ENCODE measurements at regions of chr11 and their contacts with region 1.

Region 1: DNA sequence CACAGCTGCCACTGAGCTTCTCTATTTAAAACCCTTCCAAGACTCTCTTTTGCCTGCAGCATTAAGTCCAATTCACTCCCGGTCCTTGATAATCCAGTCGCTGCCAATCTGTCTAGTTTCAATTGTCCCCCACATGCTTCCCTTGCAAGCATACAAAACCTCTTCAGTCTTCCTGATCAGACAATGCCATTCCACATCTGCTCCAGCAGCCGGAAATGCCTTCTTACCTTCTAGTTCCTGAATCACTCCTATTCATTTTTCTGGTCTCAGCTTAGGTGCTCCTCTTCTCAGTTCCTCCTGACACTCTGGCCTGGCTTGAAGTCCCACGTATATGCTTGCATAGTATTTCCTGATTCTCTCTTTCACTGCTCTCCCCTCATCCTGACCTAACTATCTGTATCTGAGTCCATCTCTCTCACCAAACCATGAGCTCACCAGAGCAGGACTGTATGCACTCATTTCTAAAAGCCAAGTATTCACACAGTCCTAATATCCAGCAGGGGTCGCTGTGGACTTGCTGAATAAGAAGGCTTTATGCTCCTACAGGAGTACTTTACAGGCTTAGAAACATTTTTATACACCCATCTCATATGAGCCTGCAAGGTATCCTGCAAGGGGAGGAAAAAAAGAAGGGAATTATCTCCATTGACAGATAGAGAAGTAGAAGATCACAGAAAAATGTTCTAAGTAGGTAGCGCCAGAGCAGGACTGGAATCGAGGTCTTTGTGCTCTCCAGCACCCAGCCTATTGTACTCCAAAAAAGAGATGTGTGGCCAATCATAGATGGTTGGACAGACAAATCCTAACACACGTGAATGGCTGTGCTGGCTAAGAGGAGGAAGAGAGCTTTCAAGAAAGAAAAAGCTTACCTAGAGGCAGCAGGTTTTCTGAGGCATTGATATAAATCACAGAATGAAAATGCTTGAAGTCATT is 19.2 kb downstream of the XRRA1 start:
- DNase-seq: peak; percentile 84
- H3K4me3 ChIP-seq: no peak overlapping the region
- H3K27ac ChIP-seq: peak overlapping the region; percentile 23
- H3K4me1 ChIP-seq: peaks cover 25% of the 10 kb centered on the region
- H3K27me3 ChIP-seq: no peaks in the 10 kb centered on the region
- CTCF ChIP-seq: peak; percentile 70 to 78
- POLR2A ChIP-seq: no peak

Region 2: DNA sequence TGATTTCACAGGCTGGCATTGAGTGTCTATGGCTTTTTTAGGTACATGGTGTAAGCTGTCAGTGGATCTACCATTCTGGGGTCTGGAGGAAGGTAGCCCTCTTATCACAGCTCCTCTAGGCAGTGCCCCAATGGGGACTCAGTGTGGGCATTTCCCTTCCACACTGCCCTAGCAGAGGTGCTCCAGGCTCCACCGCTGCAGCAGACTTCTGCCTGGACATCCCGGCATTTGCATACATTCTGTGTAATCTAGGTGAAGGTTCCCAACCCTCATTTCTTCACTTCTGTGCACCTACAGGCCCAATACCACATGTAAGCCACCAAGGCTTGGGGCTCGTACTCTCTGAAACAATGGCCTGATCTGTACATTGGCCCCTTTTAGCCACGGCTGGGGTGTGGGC is 102.8 kb before region 1 on chr11:
- CTCF ChIA-PET with region 1: no interaction called
- POLR2A ChIA-PET with region 1: no interaction called
- dilution Hi-C with region 1: no loop called
- intact Hi-C with region 1: no loop called
- DNase-seq: no peak
- H3K4me3 ChIP-seq: no peak overlapping the region
- H3K27ac ChIP-seq: no peak overlapping the region
- H3K4me1 ChIP-seq: peaks cover 14% of the 10 kb centered on the region
- H3K27me3 ChIP-seq: no peaks in the 10 kb centered on the region
- CTCF ChIP-seq: no peak
- POLR2A ChIP-seq: no peak

Region 3: GRCh38 chr11:74849525-74850391 is 79.9 kb before region 1 on chr11:
- CTCF ChIA-PET with region 1: no interaction called
- POLR2A ChIA-PET with region 1: no interaction called
- dilution Hi-C with region 1: no loop called
- intact Hi-C with region 1: no loop called
- DNase-seq: no peak
- H3K4me3 ChIP-seq: no peak overlapping the region
- H3K27ac ChIP-seq: no peak overlapping the region
- H3K4me1 ChIP-seq: peaks cover 12% of the 10 kb centered on the region
- H3K27me3 ChIP-seq: no peaks in the 10 kb centered on the region
- CTCF ChIP-seq: no peak
- POLR2A ChIP-seq: no peak

Region 4: GRCh38 chr11:74956397-74957015 is 26.8 kb after region 1 on chr11:
- CTCF ChIA-PET with region 1: interaction called, 15 read pairs
- POLR2A ChIA-PET with region 1: no interaction called
- dilution Hi-C with region 1: no loop called
- intact Hi-C with region 1: no loop called
- DNase-seq: no peak
- H3K4me3 ChIP-seq: no peak overlapping the region
- H3K27ac ChIP-seq: no peak overlapping the region
- H3K4me1 ChIP-seq: peaks cover 11% of the 10 kb centered on the region
- H3K27me3 ChIP-seq: no peaks in the 10 kb centered on the region
- CTCF ChIP-seq: no peak
- POLR2A ChIP-seq: no peak

Region 5: DNA sequence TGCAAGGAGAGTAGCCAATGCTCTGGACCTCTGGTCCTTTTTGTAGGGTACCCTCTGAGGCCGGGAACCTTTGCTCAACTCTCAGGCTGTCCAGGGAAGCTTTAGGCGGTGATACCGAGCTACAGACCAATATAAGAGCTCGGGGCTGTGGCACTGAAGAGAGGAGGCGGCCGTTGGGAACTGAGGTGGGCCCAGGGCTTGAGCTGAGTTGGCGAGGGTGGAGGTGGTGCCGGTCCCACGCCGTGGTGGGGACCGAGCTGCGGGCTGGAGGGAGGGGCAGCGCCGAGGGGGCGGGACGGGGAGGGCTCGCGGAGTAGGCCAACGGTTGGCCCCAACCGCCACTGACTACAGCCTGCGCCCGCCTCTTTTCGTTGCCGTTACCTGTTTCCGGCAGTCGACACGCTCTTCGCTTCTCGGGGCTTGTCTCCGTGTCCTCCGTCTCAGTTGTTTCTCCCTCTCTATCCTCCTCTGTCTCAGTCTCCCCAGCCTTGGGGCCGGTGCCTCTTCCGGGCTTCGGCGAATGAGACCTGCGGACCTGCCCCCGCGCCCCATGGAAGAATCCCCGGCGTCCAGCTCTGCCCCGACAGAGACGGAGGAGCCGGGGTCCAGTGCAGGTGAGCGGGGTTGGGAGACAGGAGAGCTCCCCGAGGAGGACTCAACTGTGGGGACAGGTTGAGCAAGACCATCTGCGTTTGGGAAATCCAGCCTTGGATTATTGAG is 59.0 kb after region 1 on chr11 and contains the start of gene NEU3:
- CTCF ChIA-PET with region 1: interaction called, 16 read pairs
- POLR2A ChIA-PET with region 1: no interaction called
- dilution Hi-C with region 1: no loop called
- intact Hi-C with region 1: no loop called
- DNase-seq: peak; percentile 82
- H3K4me3 ChIP-seq: peak within 1 kb of the TSS; percentile 52 to 74 (median 62)
- H3K27ac ChIP-seq: peak within 1 kb of the TSS; percentile 25
- H3K4me1 ChIP-seq: peaks cover 9% of the 10 kb centered on the region
- H3K27me3 ChIP-seq: no peaks in the 10 kb centered on the region
- CTCF ChIP-seq: no peak
- POLR2A ChIP-seq: peak; percentile 81
- total RNA-seq, gene NEU3: 7.0 and 7.6 TPM in 2 replicates

Region 6: GRCh38 chr11:75031771-75032549 is 102.3 kb after region 1 on chr11:
- CTCF ChIA-PET with region 1: interaction called, 83 read pairs
- POLR2A ChIA-PET with region 1: no interaction called
- dilution Hi-C with region 1: no loop called
- intact Hi-C with region 1: loop called (anchors 1 kb)
- DNase-seq: peak; percentile 70
- H3K4me3 ChIP-seq: no peak overlapping the region
- H3K27ac ChIP-seq: no peak overlapping the region
- H3K4me1 ChIP-seq: peaks cover 8% of the 10 kb centered on the region
- H3K27me3 ChIP-seq: peaks cover 0 to 7% of the 10 kb centered on the region in 2 experiments
- CTCF ChIP-seq: peak; percentile 85
- POLR2A ChIP-seq: no peak

Region 7: DNA sequence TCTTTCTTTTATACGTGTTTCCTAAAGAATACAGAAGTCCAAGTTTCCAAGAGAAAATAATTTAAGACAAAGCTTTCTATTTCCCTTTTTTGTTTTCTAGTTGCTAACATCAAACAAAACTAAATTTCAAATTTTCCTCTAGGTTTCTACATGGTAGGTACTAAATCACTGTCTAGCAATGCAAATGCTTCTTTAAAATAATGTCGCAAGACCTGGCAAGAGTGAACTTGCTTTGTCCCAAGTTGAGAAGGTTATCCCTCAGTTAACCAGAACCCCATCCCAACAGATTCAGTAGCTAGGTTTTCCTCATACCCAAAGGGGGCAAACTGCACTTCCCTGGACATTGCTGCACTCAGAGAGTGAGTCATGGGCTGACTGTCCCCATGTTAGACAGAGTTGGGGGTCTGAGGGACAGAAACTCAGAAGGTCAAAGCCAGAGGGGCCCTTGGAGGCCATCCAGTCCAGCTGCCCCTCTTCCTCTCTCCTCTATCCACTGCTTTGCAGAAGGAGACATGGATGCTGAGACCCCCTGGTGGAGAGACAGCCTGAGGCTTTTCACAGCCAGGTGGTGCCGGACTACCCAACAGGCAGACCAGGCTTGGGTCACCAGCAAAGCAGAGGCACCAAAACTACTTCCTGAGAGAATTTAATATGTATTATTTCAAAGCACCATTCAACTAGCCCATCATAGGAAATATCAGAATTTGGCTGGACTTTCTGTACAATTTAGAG is 143.9 kb after region 1 on chr11:
- CTCF ChIA-PET with region 1: no interaction called
- POLR2A ChIA-PET with region 1: no interaction called
- dilution Hi-C with region 1: no loop called
- intact Hi-C with region 1: no loop called
- DNase-seq: no peak
- H3K4me3 ChIP-seq: no peak overlapping the region
- H3K27ac ChIP-seq: no peak overlapping the region
- H3K4me1 ChIP-seq: no peaks in the 10 kb centered on the region
- H3K27me3 ChIP-seq: peaks cover 12 to 21% of the 10 kb centered on the region in 2 experiments
- CTCF ChIP-seq: peak in 1 of 2 donors; percentile 5
- POLR2A ChIP-seq: no peak

Region 8: DNA sequence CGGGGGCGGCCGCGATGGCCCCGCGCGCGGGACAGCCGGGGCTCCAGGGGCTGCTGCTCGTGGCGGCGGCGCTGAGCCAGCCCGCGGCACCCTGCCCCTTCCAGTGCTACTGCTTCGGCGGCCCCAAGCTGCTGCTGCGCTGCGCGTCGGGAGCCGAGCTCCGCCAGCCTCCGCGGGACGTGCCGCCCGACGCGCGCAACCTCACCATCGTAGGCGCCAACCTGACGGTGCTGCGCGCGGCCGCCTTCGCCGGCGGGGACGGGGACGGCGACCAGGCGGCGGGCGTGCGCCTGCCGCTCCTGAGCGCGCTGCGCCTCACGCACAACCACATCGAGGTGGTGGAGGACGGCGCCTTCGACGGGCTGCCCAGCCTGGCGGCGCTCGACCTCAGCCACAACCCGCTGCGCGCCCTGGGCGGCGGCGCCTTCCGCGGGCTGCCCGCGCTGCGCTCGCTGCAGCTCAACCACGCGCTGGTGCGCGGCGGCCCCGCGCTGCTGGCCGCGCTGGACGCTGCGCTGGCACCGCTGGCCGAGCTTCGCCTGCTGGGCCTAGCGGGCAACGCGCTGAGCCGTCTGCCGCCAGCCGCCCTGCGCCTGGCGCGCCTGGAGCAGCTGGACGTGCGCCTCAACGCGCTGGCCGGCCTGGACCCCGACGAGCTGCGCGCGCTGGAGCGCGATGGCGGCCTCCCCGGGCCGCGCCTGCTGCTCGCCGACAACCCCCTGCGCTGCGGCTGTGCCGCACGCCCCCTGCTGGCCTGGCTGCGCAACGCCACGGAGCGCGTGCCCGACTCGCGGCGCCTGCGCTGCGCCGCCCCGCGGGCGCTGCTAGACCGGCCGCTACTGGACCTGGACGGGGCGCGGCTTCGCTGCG is 311.6 kb after region 1 on chr11:
- CTCF ChIA-PET with region 1: interaction called, 16 read pairs
- POLR2A ChIA-PET with region 1: no interaction called
- dilution Hi-C with region 1: no loop called
- intact Hi-C with region 1: loop called (anchors 2 kb)
- DNase-seq: peak; percentile 85
- H3K4me3 ChIP-seq: peak overlapping the region in 2 of 3 experiments; percentile 4 to 31
- H3K27ac ChIP-seq: no peak overlapping the region
- H3K4me1 ChIP-seq: peaks cover 7% of the 10 kb centered on the region
- H3K27me3 ChIP-seq: peaks cover 50 to 51% of the 10 kb centered on the region in 2 experiments
- CTCF ChIP-seq: peak; percentile 61 to 99
- POLR2A ChIP-seq: no peak

Measured in endothelial cell of umbilical vein (primary cell).